Endothelial cell of umbilical vein (primary cell): ENCODE measurements at regions of chr3 and their contacts with region 1.

Region 1: GRCh38 chr3:152268555-152269425 is at the start of gene MBNL1:
- DNase-seq: peak; percentile 91
- H3K4me3 ChIP-seq: peak within 1 kb of the TSS; percentile 71 to 97 (median 82)
- H3K27ac ChIP-seq: peak within 1 kb of the TSS; percentile 86
- H3K4me1 ChIP-seq: peaks cover 42% of the 10 kb centered on the region
- H3K27me3 ChIP-seq: no peaks in the 10 kb centered on the region
- CTCF ChIP-seq: no peak
- POLR2A ChIP-seq: peak; percentile 94
- total RNA-seq, gene MBNL1: 362 and 385 TPM in 2 replicates

Region 2: GRCh38 chr3:151765685-151766084 is 503.1 kb before region 1 on chr3:
- CTCF ChIA-PET with region 1: no interaction called
- POLR2A ChIA-PET with region 1: no interaction called
- dilution Hi-C with region 1: no loop called
- intact Hi-C with region 1: no loop called
- DNase-seq: peak; percentile 75
- H3K4me3 ChIP-seq: no peak overlapping the region
- H3K27ac ChIP-seq: peak overlapping the region; percentile 76
- H3K4me1 ChIP-seq: peaks cover 43% of the 10 kb centered on the region
- H3K27me3 ChIP-seq: no peaks in the 10 kb centered on the region
- CTCF ChIP-seq: no peak
- POLR2A ChIP-seq: peak; percentile 24

Region 3: DNA sequence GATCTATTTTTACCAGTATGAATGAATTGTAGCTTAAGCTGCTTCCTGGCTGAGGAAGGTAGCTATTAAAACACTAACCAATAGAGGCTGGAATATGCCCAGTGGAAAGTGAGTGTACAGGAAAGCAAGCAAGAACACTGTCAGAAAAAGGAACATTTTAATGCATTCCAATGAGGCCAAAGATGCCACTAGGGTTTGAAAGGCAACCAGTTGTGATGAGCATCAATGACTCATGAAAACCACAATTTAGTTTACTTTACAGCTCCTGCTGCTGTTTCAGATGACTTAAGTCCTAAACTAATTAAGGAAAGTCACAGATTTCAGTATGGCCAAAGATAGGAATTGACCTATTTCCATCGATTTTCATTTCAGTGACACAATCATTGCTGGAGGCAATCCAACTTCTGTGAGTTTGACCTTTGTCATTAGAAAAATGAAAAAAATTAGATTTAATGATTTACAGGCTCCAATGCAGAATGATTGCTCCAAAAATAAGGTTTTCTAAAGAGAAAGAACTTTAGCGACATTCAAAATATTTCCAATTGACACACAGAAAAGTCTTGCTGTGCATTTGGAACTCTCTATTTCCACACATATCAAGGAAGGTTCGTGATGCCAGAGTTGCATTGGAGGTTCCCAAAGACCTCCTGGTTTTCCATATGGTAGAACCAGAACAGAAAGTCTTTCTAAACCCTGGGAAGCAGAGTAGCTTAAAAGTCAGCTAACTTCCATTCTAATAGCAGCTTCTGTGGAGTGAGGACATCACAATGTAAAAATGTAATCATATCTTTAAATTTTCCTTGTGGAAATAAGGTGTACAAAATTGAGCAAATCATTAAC is 292.4 kb before region 1 on chr3:
- CTCF ChIA-PET with region 1: no interaction called
- POLR2A ChIA-PET with region 1: no interaction called
- dilution Hi-C with region 1: no loop called
- intact Hi-C with region 1: loop called (anchors 1 kb)
- DNase-seq: peak; percentile 99
- H3K4me3 ChIP-seq: peak overlapping the region in 1 of 3 experiments; percentile 3
- H3K27ac ChIP-seq: peak overlapping the region; percentile 90
- H3K4me1 ChIP-seq: peaks cover 32% of the 10 kb centered on the region
- H3K27me3 ChIP-seq: no peaks in the 10 kb centered on the region
- CTCF ChIP-seq: no peak
- POLR2A ChIP-seq: no peak

Region 4: GRCh38 chr3:152071924-152072323 is 196.9 kb before region 1 on chr3:
- CTCF ChIA-PET with region 1: interaction called, 11 read pairs
- POLR2A ChIA-PET with region 1: no interaction called
- dilution Hi-C with region 1: no loop called
- intact Hi-C with region 1: loop called (anchors 2 kb)
- DNase-seq: peak; percentile 50
- H3K4me3 ChIP-seq: no peak overlapping the region
- H3K27ac ChIP-seq: no peak overlapping the region
- H3K4me1 ChIP-seq: peaks cover 4% of the 10 kb centered on the region
- H3K27me3 ChIP-seq: no peaks in the 10 kb centered on the region
- CTCF ChIP-seq: peak; percentile 37 to 40
- POLR2A ChIP-seq: no peak

Region 5: GRCh38 chr3:152127058-152127457 is 141.7 kb before region 1 on chr3:
- CTCF ChIA-PET with region 1: no interaction called
- POLR2A ChIA-PET with region 1: no interaction called
- dilution Hi-C with region 1: no loop called
- intact Hi-C with region 1: no loop called
- DNase-seq: no peak
- H3K4me3 ChIP-seq: no peak overlapping the region
- H3K27ac ChIP-seq: no peak overlapping the region
- H3K4me1 ChIP-seq: peaks cover 3% of the 10 kb centered on the region
- H3K27me3 ChIP-seq: no peaks in the 10 kb centered on the region
- CTCF ChIP-seq: no peak
- POLR2A ChIP-seq: no peak

Region 6: DNA sequence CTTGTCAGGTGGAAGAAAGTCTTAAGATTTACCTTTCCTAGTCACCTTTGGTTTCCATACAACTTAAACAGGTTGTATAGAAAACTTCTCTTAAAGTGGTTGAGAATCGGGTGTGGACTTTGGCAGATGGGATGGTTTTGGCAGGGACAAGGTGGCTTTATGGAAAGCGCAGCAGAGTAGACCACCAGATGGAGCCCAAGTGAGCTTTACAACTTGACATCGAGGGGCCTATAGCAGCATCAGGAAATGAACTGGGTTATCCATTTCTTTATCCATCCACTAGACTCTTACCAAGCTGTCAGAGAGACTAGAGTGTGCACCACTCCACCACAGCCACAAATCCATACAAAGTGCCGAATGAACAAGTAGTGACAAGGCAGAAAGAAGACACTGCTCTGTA is 85.3 kb before region 1 on chr3:
- CTCF ChIA-PET with region 1: interaction called, 4 read pairs
- POLR2A ChIA-PET with region 1: no interaction called
- dilution Hi-C with region 1: no loop called
- intact Hi-C with region 1: loop called (anchors 1 kb)
- DNase-seq: peak; percentile 56
- H3K4me3 ChIP-seq: no peak overlapping the region
- H3K27ac ChIP-seq: no peak overlapping the region
- H3K4me1 ChIP-seq: no peaks in the 10 kb centered on the region
- H3K27me3 ChIP-seq: no peaks in the 10 kb centered on the region
- CTCF ChIP-seq: peak; percentile 53 to 63
- POLR2A ChIP-seq: no peak

Region 7: DNA sequence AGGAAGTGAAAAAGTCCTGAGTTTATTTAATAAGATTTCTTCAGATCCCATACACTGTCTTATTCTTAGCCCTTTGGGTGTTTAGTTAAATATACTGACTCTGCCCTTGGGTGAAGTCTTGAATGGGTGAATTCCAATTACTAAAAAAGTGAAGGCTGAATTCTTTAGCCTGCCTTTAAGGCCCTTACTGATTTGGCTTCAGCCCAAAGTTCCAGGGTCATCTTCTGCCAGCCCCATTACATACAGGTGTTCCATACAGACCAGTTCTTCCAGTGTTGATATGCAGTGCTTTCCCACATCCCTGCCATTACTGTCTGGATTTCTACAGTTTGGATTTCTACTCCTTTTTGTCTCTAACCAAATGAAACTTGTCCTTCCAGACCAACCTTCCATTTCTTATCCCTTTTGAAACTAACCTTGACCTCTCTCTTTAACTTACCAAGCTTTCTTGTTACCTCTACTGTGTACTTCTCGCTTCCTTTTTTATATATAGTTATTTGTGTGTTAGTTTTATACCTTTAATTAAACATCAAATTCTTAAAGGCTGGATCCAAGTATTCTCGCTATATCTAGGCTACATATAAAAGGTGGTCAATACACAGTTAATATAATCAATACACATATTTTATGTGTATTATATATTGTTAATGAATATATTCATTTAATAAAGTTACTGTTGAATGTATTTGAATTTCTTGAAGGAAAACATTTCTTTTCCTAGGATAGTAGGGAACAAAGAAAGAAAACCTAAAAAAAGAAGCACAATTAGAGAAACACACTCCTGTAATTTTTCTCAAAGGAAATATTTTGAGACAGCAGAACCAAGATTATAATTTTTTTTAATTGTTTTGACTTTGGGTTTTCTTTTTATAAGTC is 14.9 kb after region 1 on chr3:
- CTCF ChIA-PET with region 1: interaction called, 16 read pairs
- POLR2A ChIA-PET with region 1: interaction called, 3 read pairs
- dilution Hi-C with region 1: no loop called
- intact Hi-C with region 1: no loop called
- DNase-seq: no peak
- H3K4me3 ChIP-seq: no peak overlapping the region
- H3K27ac ChIP-seq: no peak overlapping the region
- H3K4me1 ChIP-seq: peaks cover 61% of the 10 kb centered on the region
- H3K27me3 ChIP-seq: no peaks in the 10 kb centered on the region
- CTCF ChIP-seq: no peak
- POLR2A ChIP-seq: no peak

Region 8: DNA sequence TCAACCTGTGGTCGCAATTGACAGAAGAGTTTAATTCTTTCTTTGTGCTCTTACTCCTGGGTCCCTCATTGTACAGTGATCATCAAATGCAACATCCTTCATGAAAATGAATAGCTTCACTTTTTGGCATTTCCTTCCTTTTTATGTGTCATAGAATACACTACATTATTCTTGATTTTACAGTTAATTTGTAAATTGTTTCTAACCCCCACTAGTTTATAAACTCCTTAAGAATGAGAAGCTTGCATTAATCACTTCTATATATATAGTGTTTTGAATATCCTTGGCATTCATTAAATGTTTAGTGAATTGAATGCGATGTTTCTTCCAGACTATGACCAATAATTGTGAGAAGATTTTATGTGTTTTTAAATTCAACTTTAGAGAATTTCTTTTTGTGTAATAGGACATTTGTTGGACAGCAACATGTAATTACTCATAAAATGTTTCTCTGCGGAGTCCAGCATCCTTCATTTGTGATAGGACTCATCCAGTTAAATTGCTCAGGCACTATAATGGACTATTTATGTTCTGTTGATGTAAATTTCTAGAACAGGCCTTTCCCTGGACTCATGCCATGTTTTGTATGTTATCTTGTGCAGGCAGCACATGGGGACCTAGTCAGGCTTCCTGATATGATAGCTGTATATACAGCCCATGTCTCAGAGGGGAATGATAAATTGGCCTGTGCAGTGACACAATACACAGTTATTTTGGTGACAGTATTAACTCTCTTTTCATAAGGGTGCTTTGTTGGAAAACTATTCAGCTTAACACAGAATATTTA is 51.2 kb after region 1 on chr3:
- CTCF ChIA-PET with region 1: interaction called, 5 read pairs
- POLR2A ChIA-PET with region 1: interaction called, 8 read pairs
- dilution Hi-C with region 1: no loop called
- intact Hi-C with region 1: loop called (anchors 2 kb)
- DNase-seq: peak; percentile 99
- H3K4me3 ChIP-seq: no peak overlapping the region
- H3K27ac ChIP-seq: peak overlapping the region; percentile 83
- H3K4me1 ChIP-seq: peaks cover 96% of the 10 kb centered on the region
- H3K27me3 ChIP-seq: no peaks in the 10 kb centered on the region
- CTCF ChIP-seq: no peak
- POLR2A ChIP-seq: peak; percentile 84

Region 9: GRCh38 chr3:152444029-152444641 is 175.3 kb after region 1 on chr3:
- CTCF ChIA-PET with region 1: no interaction called
- POLR2A ChIA-PET with region 1: no interaction called
- dilution Hi-C with region 1: no loop called
- intact Hi-C with region 1: loop called (anchors 2 kb)
- DNase-seq: peak; percentile 80
- H3K4me3 ChIP-seq: no peak overlapping the region
- H3K27ac ChIP-seq: peak overlapping the region; percentile 14
- H3K4me1 ChIP-seq: peaks cover 12% of the 10 kb centered on the region
- H3K27me3 ChIP-seq: no peaks in the 10 kb centered on the region
- CTCF ChIP-seq: peak; percentile 25 to 46
- POLR2A ChIP-seq: no peak